Testis (tissue), 5 donors: ENCODE measurements at regions of chr13 and their contacts with region 1.

Region 1: GRCh38 chr13:51154029-51154555 is 43.0 kb upstream of the C13orf42 start:
- DNase-seq: no peak
- H3K4me3 ChIP-seq: no peak overlapping the region
- H3K27ac ChIP-seq: no peak overlapping the region
- H3K4me1 ChIP-seq: no peaks in the 10 kb centered on the region
- H3K27me3 ChIP-seq: no peaks in the 10 kb centered on the region
- CTCF ChIP-seq: no peak
- POLR2A ChIP-seq: no peak

Region 2: GRCh38 chr13:51286135-51287002 is 132.3 kb after region 1 on chr13:
- intact Hi-C with region 1: loop called (anchors 10 kb)
- DNase-seq: peak; percentile 89
- H3K4me3 ChIP-seq: no peak overlapping the region
- H3K27ac ChIP-seq: no peak overlapping the region
- H3K4me1 ChIP-seq: no peaks in the 10 kb centered on the region
- H3K27me3 ChIP-seq: no peaks in the 10 kb centered on the region
- CTCF ChIP-seq: peak; percentile 85 to 86 (median 85)
- POLR2A ChIP-seq: no peak